ENCODE measurements at regions of chr2 and their contacts with region 1.

Region 1: GRCh38 chr2:112275306-112275886 is at the start of gene ZC3H6:
- DNase-seq: peak; percentile 94 to 99
- H3K4me3 ChIP-seq: peak within 1 kb of the TSS; percentile 96 to 99
- H3K27ac ChIP-seq: peak within 1 kb of the TSS; percentile 100
- H3K4me1 ChIP-seq: peaks cover 0 to 8% of the 10 kb centered on the region in 2 donors
- H3K27me3 ChIP-seq: no peaks in the 10 kb centered on the region
- CTCF ChIP-seq: peak in 1 of 3 experiments; percentile 28
- total RNA-seq, gene ZC3H6: 1.5 TPM

Region 2: DNA sequence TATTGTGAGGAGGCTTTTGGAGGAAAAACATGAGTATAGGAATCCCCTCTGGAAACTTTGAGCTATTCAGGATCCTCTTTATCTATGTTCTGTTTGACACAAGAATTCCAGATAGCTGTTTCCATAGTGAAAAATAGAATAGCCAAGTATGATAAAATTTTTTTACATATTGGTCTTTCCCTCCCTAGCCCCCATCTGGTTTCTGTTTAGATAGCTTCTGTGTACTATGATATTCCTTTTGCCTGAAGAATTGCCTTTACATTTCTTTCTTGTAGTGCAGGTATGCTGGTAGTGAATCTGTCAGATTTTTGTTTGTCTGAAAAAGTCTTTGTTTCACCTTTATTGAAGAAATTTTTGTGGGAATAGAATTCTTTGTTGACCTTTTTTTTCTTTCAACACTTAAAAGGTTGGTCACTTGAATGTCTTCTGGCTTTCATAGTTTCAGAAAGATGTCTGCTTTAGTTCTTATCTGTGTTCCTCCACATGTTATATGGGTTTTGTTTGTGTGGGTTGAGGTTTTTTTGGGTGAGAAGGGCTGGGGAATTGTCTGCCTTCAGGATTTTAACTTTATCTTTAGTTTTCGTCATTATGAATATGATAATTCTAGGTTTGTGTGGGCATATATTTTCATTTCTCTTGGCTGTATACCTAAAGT is 167.1 kb before region 1 on chr2:
- intact Hi-C with region 1: no loop called
- DNase-seq: no peak
- H3K4me3 ChIP-seq: no peak overlapping the region
- H3K27ac ChIP-seq: no peak overlapping the region
- H3K4me1 ChIP-seq: no peaks in the 10 kb centered on the region
- H3K27me3 ChIP-seq: no peaks in the 10 kb centered on the region
- CTCF ChIP-seq: no peak

Region 3: GRCh38 chr2:112304298-112304941 is 29.0 kb after region 1 on chr2:
- intact Hi-C with region 1: loop called (anchors 1 kb)
- DNase-seq: no peak
- H3K4me3 ChIP-seq: no peak overlapping the region
- H3K27ac ChIP-seq: peak overlapping the region; percentile 80 to 87
- H3K4me1 ChIP-seq: peaks cover 4 to 16% of the 10 kb centered on the region in 2 donors
- H3K27me3 ChIP-seq: no peaks in the 10 kb centered on the region
- CTCF ChIP-seq: no peak

Region 4: DNA sequence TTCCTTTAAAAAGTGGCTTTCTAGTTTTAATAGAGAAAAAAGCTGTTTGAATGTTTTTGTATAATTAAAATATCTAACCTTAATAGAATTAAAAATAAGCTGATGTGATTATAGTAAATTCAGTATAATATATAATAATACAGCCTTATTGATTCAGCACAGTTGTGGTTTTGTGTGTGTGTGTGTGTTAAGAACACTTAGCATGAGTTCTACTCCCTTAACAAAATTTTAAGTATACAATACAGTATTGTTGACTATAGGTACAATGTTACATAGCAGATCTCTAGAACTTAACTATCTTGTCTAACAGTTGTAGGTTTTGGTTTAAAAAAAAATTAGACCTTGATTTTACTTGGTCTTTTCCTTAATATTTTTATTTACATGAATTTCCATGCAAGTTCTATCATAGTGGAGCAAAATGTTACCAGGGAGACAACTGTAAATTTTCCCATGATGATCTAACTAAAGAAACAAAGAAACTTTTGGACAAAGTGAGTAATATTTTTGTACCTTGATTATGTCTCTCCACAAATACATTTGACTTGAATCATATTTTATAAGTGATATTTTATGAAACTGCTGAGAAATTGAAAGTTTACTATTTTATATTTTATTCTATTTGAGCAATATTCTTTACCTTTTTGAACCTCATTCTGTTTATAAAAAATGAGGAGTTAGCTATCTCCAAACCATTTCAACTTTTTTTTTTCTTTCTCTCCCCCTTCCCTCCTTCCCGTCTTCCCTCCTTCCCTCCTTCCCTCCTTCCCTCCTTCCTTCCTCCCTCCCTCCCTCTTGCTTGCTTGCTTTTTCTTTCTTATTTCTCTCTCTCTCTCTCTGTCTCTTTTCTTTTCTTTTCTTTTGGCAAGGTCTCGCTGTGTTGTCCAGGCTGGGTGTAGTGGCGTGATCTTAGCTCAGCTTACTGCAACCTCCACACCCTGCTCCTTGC is 46.3 kb after region 1 on chr2:
- intact Hi-C with region 1: loop called (anchors 2 kb)
- DNase-seq: no peak
- H3K4me3 ChIP-seq: peak overlapping the region in 1 of 2 donors; percentile 36
- H3K27ac ChIP-seq: peak overlapping the region; percentile 77
- H3K4me1 ChIP-seq: peaks cover 0 to 13% of the 10 kb centered on the region in 2 donors
- H3K27me3 ChIP-seq: no peaks in the 10 kb centered on the region
- CTCF ChIP-seq: no peak

Region 5: DNA sequence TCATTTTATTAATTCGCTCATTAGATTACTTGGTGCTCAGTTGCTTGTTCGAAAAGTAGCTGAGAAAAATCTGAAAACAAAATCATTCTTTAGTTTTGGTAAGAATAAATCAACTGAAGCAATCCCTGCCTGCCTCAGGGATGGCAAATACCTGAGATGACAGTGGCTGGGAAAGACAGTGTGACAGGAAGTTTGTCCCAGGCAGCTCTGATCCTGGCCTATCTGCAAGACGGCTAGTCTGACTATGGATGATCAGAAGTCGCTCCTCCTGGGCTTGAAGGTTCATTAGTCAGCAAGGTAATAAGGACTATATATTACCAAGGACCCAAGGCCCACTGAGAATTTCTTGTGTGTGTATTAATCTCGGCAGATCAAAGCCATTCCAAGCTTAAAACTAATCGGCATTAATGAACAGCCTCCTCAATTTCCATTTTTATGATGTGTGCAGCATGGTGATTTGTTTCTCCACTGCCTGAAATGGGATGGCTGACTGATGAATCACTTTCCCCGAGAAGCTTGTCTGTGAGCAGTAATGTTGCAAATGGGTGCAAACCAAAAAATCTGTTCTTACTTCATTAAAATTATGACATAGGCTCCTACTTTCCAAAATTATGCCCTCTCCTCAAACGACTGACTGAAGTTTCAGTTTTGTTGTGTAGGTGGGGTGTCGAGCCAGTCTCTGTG is 1814.4 kb after region 1 on chr2:
- intact Hi-C with region 1: no loop called
- DNase-seq: no peak
- H3K4me3 ChIP-seq: no peak overlapping the region
- H3K27ac ChIP-seq: no peak overlapping the region
- H3K4me1 ChIP-seq: no peaks in the 10 kb centered on the region
- H3K27me3 ChIP-seq: no peaks in the 10 kb centered on the region
- CTCF ChIP-seq: no peak

Measured in ascending aorta (tissue), 2 donors.